Mammary epithelial cell (primary cell): ENCODE measurements at regions of chr3 and their contacts with region 1.

Region 1: GRCh38 chr3:48575366-48575765 is 11.8 kb upstream of the UCN2 start:
- DNase-seq: no peak
- H3K4me3 ChIP-seq: no peak overlapping the region
- H3K27ac ChIP-seq: no peak overlapping the region
- H3K4me1 ChIP-seq: no peaks in the 10 kb centered on the region
- H3K27me3 ChIP-seq: no peaks in the 10 kb centered on the region
- CTCF ChIP-seq: no peak

Region 2: GRCh38 chr3:48623851-48624547 is 48.6 kb after region 1 on chr3:
- CTCF ChIA-PET with region 1: no interaction called
- dilution Hi-C with region 1: no loop called
- in situ Hi-C with region 1: no loop called
- intact Hi-C with region 1: no loop called
- DNase-seq: no peak
- H3K4me3 ChIP-seq: no peak overlapping the region
- H3K27ac ChIP-seq: no peak overlapping the region
- H3K4me1 ChIP-seq: no peaks in the 10 kb centered on the region
- H3K27me3 ChIP-seq: no peaks in the 10 kb centered on the region
- CTCF ChIP-seq: no peak

Region 3: GRCh38 chr3:48685602-48686511 is 110.5 kb after region 1 on chr3 and contains the start of gene NCKIPSD:
- CTCF ChIA-PET with region 1: no interaction called
- dilution Hi-C with region 1: loop called (anchors 5 kb)
- in situ Hi-C with region 1: no loop called
- intact Hi-C with region 1: no loop called
- DNase-seq: peak; percentile 79
- H3K4me3 ChIP-seq: peak within 1 kb of the TSS; percentile 51 to 91 (median 79)
- H3K27ac ChIP-seq: peak within 1 kb of the TSS; percentile 69
- H3K4me1 ChIP-seq: peaks cover 32% of the 10 kb centered on the region
- H3K27me3 ChIP-seq: no peaks in the 10 kb centered on the region
- CTCF ChIP-seq: peak; percentile 45 to 87
- total RNA-seq, gene NCKIPSD: 14.8 to 21.1 TPM